ENCODE measurements at regions of chr1 and their contacts with region 1.

Region 1: DNA sequence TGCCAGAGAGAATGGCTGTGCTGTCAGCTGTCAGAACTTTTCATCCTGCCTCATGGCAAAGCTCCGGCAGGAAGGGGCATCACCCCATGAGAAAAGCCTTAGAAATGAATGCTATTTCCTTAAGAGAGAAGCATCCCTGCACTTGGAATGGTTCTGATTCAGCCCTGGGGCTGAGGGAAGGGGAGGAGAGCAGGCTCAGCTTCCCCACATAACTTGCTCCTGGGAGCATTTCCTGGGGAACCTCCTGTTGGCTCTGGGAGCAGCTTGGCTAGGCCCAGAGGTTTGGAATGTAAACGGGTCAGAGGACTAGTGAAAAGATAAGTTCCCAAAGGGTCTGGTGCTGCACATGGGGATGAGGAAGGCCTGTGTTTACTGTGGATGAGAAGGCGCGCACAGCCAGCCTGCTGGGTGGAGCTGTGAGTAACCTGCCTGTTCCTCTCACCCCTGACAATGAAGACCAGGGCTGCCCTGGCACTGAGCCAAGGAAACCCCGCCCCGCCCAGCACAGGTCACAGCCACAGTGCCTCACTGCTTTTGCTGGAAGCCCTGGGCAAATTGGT is 5.0 kb downstream of the PRELP start:
- DNase-seq: peak; percentile 96
- H3K4me3 ChIP-seq: no peak overlapping the region
- H3K27me3 ChIP-seq: no peaks in the 10 kb centered on the region
- CTCF ChIP-seq: no peak

Region 2: GRCh38 chr1:203450479-203451149 is 30.0 kb before region 1 on chr1:
- CTCF ChIA-PET with region 1: interaction called, 11 read pairs
- POLR2A ChIA-PET with region 1: no interaction called
- DNase-seq: no peak
- H3K4me3 ChIP-seq: no peak overlapping the region
- H3K27me3 ChIP-seq: no peaks in the 10 kb centered on the region
- CTCF ChIP-seq: 0 out of 2 replicates have a peak, but pooled peaks have one; percentile 2

Region 3: GRCh38 chr1:203549309-203549708 is 68.7 kb after region 1 on chr1:
- CTCF ChIA-PET with region 1: no interaction called
- POLR2A ChIA-PET with region 1: no interaction called
- DNase-seq: no peak
- H3K4me3 ChIP-seq: no peak overlapping the region
- H3K27me3 ChIP-seq: no peaks in the 10 kb centered on the region
- CTCF ChIP-seq: no peak

Measured in BJ (cell line).